Cardiac septum (tissue), 1 donor: ENCODE measurements at regions of chr17 and their contacts with region 1.

Region 1: GRCh38 chr17:82848022-82848592 is 8.3 kb upstream of the ZNF750 start:
- DNase-seq: no peak

Region 2: DNA sequence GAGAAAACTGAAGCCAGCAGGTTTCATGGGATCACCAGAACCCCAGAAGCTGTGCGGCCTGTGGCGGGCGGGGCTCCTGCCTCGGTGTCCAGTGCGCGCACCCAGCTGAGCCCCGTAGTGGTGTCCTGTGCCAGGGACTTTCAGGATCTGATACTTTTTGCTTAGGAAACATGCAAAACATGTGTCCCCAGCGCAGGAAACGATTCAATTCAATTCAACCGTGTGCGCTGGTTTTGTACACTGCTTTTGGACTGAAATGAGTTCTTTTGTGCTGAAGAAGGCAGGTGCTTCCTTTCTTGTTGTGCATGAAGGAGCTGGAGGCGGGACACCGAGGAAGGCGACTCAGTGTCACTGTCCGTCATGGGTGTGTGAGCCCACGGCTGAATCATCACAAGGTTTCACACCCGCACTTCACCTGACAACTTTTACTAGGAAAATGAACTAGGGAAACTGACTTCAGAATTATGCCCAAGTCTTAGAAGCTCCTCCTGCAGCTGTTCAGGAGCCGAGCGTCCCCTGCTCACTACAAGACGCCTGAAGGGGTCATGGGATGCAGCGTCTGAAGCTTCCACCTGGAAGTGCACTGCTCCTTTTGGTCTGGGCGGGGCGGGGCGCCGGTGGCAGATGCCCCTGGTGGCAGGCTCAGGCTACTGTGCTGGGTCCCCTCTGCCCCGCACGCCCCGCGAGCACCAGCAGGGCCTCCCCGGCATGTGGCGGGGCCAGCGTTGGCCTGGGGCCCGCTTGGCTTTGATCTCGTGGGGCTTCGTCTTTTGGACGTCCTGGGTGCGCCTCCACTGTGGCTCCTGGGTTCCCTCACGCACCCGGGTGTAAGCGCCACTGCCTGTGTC is 23.2 kb after region 1 on chr17:
- intact Hi-C with region 1: loop called (anchors 2 kb)
- DNase-seq: no peak